Endothelial cell of umbilical vein (primary cell): ENCODE measurements at regions of chr7 and their contacts with region 1.

Region 1: GRCh38 chr7:15015545-15016326 is 113.2 kb upstream of the DGKB start:
- DNase-seq: peak; percentile 77
- H3K4me3 ChIP-seq: peak overlapping the region in 1 of 3 experiments; percentile 52
- H3K27ac ChIP-seq: no peak overlapping the region
- H3K4me1 ChIP-seq: peaks cover 4% of the 10 kb centered on the region
- H3K27me3 ChIP-seq: no peaks in the 10 kb centered on the region
- CTCF ChIP-seq: peak; percentile 44 to 53
- POLR2A ChIP-seq: no peak

Region 2: DNA sequence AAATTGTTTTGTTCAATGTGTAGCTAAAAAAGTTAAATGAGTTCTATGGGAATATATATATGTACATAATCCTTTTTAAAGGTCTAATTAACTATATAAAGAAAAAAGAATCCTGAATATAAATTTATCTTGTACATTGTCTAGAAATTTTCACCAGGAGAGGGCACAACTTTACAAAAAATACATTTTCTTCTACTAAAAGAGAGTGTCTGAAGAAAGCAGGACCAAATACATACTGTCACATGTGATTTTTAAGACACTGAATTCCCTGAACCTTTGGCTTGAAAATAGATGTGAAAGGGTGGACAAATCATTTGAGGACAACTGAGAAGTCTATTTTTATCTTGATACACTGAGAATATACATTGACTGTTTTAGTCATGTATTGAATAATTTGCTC is 317.5 kb before region 1 on chr7:
- CTCF ChIA-PET with region 1: interaction called, 22 read pairs
- POLR2A ChIA-PET with region 1: no interaction called
- dilution Hi-C with region 1: no loop called
- intact Hi-C with region 1: loop called (anchors 1 kb)
- DNase-seq: peak; percentile 29
- H3K4me3 ChIP-seq: no peak overlapping the region
- H3K27ac ChIP-seq: no peak overlapping the region
- H3K4me1 ChIP-seq: no peaks in the 10 kb centered on the region
- H3K27me3 ChIP-seq: no peaks in the 10 kb centered on the region
- CTCF ChIP-seq: no peak
- POLR2A ChIP-seq: no peak

Region 3: DNA sequence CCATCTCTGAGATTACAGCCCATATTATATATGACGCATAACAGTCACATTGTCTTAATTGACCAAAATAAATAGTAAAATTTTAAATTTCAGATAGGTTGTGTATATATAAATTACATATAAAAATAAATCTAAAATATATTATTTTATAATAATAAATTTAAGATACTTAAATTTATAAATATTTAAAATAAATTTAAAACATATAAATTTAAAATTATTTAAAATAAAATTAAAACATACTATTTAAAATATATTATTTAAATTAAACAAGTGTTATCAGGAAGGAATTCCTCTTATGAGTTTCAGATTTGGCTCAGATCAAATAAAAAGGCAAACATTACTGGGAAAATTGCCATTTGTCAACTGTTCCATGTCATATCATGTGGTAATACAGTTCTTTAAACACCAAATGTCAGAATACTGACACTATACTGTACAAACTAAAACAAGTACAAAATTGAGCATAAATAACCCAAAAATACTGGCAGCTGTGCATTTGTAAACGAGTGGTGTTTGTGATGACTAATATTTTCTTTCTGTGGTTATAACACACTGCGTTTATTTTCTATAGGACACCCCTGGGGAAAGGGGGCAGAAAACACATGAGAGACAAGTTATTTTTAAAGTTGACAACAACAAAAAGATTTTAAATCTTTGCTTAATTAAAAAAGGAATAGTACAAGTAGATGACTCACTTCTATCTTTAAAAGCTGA is 41.9 kb before region 1 on chr7:
- CTCF ChIA-PET with region 1: interaction called, 11 read pairs
- POLR2A ChIA-PET with region 1: interaction called, 3 read pairs
- dilution Hi-C with region 1: no loop called
- intact Hi-C with region 1: no loop called
- DNase-seq: peak; percentile 39
- H3K4me3 ChIP-seq: no peak overlapping the region
- H3K27ac ChIP-seq: no peak overlapping the region
- H3K4me1 ChIP-seq: peaks cover 18% of the 10 kb centered on the region
- H3K27me3 ChIP-seq: no peaks in the 10 kb centered on the region
- CTCF ChIP-seq: no peak
- POLR2A ChIP-seq: no peak

Region 4: DNA sequence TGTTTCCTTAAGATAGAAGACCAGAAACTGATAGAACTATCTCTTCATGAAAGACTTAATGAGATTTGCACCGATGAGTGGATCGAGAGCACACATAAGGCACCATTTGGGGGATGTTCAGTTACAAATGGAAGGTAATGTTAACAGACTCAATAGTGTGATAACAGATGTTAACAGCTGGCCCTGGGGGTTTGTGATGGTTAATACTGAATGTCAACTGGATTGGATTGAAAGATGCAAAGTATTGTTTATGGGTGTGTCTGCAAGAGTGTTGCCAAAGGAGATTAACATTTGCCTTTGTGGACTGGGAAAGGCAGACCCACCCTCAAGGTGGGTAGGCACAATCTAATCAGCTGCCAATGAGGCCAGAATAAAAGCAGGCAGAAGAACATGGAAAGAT is 17.3 kb after region 1 on chr7:
- CTCF ChIA-PET with region 1: interaction called, 38 read pairs
- POLR2A ChIA-PET with region 1: no interaction called
- dilution Hi-C with region 1: no loop called
- intact Hi-C with region 1: no loop called
- DNase-seq: no peak
- H3K4me3 ChIP-seq: no peak overlapping the region
- H3K27ac ChIP-seq: no peak overlapping the region
- H3K4me1 ChIP-seq: peaks cover 6% of the 10 kb centered on the region
- H3K27me3 ChIP-seq: no peaks in the 10 kb centered on the region
- CTCF ChIP-seq: no peak
- POLR2A ChIP-seq: no peak

Region 5: GRCh38 chr7:15130666-15131541 is 115.2 kb after region 1 on chr7:
- CTCF ChIA-PET with region 1: interaction called, 6 read pairs
- POLR2A ChIA-PET with region 1: no interaction called
- dilution Hi-C with region 1: no loop called
- intact Hi-C with region 1: loop called (anchors 2 kb)
- DNase-seq: peak; percentile 86
- H3K4me3 ChIP-seq: peak overlapping the region in 1 of 3 experiments; percentile 37
- H3K27ac ChIP-seq: peak overlapping the region; percentile 98
- H3K4me1 ChIP-seq: peaks cover 38% of the 10 kb centered on the region
- H3K27me3 ChIP-seq: no peaks in the 10 kb centered on the region
- CTCF ChIP-seq: no peak
- POLR2A ChIP-seq: no peak

Region 6: GRCh38 chr7:16071246-16071857 is 1055.6 kb after region 1 on chr7:
- CTCF ChIA-PET with region 1: interaction called, 5 read pairs
- POLR2A ChIA-PET with region 1: no interaction called
- dilution Hi-C with region 1: no loop called
- intact Hi-C with region 1: loop called (anchors 5 kb)
- DNase-seq: peak; percentile 70
- H3K4me3 ChIP-seq: no peak overlapping the region
- H3K27ac ChIP-seq: no peak overlapping the region
- H3K4me1 ChIP-seq: peaks cover 12% of the 10 kb centered on the region
- H3K27me3 ChIP-seq: no peaks in the 10 kb centered on the region
- CTCF ChIP-seq: peak; percentile 41 to 57
- POLR2A ChIP-seq: no peak